ENCODE measurements at regions of chr20 and their contacts with region 1.

Region 1: GRCh38 chr20:23655491-23656211 is 17.9 kb upstream of the CST3 start:
- DNase-seq: no peak
- ATAC-seq: no peak
- H3K4me3 ChIP-seq: no peak overlapping the region
- H3K27ac ChIP-seq: no peak overlapping the region
- H3K4me1 ChIP-seq: peaks cover 10% of the 10 kb centered on the region; the same call in 2 of the 3 replicates
- CTCF ChIP-seq: no peak
- EP300 ChIP-seq: no peak
- POLR2A ChIP-seq: no peak
- RAD21 ChIP-seq: no peak

Region 2: DNA sequence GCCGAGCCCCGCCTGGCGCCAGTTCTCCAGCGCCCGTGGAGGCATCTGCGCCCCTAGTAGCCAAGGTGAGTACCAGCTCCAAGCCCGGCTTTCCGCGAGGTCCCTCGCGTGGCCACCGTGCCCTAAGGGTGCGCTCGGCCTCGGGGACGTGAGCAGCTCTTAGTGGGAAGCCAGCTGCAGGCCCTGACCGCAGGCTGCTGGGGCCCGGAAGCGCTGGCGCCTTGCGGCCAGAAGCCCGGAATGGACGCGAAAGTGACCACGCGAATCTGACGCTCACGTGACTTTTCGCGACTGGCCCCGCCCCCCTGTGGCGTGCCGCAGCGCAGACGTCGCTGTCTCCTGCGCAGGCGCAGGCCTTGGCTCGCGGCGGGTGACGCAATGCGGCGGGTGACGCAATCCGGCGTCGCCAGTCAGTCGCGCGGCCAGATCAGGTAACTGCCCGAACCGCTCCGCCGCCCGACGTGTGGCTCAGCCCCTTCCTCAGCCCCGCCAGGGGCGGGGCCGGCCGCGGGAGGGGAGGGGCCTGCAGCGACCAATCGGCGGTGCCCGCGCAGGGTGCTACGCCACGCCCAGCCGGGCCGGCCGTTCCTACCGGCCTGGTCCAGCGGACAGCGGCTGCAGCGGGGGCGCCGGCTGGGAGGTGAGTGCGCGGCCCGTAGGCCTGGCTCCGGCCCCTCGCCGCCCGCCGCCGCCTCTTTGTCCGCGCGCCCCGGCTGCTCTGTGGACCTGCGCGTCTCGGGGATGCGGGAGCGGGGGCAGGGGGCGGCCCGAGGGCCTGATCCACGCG is 293.9 kb before region 1 on chr20 and contains the start of gene GZF1:
- CTCF ChIA-PET with region 1: no interaction called
- POLR2A ChIA-PET with region 1: no interaction called
- DNase-seq: peak; percentile 87 to 99
- ATAC-seq: peak; percentile 71 to 83
- H3K4me3 ChIP-seq: peak within 1 kb of the TSS; percentile 89
- H3K27ac ChIP-seq: peak within 1 kb of the TSS; percentile 92 to 96
- H3K4me1 ChIP-seq: peaks cover 37% of the 10 kb centered on the region
- CTCF ChIP-seq: no peak
- EP300 ChIP-seq: no peak
- POLR2A ChIP-seq: peak; percentile 96
- RAD21 ChIP-seq: no peak
- polyA plus RNA-seq, gene GZF1: 24.7 and 33.4 TPM in 2 replicates

Region 3: GRCh38 chr20:23668477-23668951 is 12.9 kb after region 1 on chr20:
- CTCF ChIA-PET with region 1: interaction called, 41 read pairs
- POLR2A ChIA-PET with region 1: no interaction called
- DNase-seq: peak; percentile 72 to 84
- ATAC-seq: peak; percentile 84 to 97
- H3K4me3 ChIP-seq: no peak overlapping the region
- H3K27ac ChIP-seq: no peak overlapping the region
- H3K4me1 ChIP-seq: no peaks in the 10 kb centered on the region
- CTCF ChIP-seq: peak; percentile 88
- EP300 ChIP-seq: no peak
- POLR2A ChIP-seq: no peak
- RAD21 ChIP-seq: peak; percentile 87

Region 4: GRCh38 chr20:23841693-23842092 is 186.0 kb after region 1 on chr20:
- CTCF ChIA-PET with region 1: no interaction called
- POLR2A ChIA-PET with region 1: no interaction called
- DNase-seq: no peak
- ATAC-seq: no peak
- H3K4me3 ChIP-seq: no peak overlapping the region
- H3K27ac ChIP-seq: no peak overlapping the region
- H3K4me1 ChIP-seq: no peaks in the 10 kb centered on the region
- CTCF ChIP-seq: no peak
- EP300 ChIP-seq: no peak
- POLR2A ChIP-seq: no peak
- RAD21 ChIP-seq: no peak

Measured in A549 (cell line).